ENCODE measurements at regions of chr1 and their contacts with region 1.

Region 1: GRCh38 chr1:59947047-59947938 is 20.7 kb upstream of the CYP2J2 start:
- DNase-seq: peak in 1 of 2 donors; percentile 69
- H3K4me3 ChIP-seq: no peak overlapping the region
- H3K27ac ChIP-seq: no peak overlapping the region
- H3K4me1 ChIP-seq: no peaks in the 10 kb centered on the region
- H3K27me3 ChIP-seq: no peaks in the 10 kb centered on the region
- CTCF ChIP-seq: peak; percentile 64 to 92 (median 88)

Region 2: GRCh38 chr1:59879574-59879973 is 67.7 kb before region 1 on chr1:
- intact Hi-C with region 1: loop called (anchors 2 kb)
- DNase-seq: no peak
- H3K4me3 ChIP-seq: no peak overlapping the region
- H3K27ac ChIP-seq: no peak overlapping the region
- H3K4me1 ChIP-seq: no peaks in the 10 kb centered on the region
- H3K27me3 ChIP-seq: no peaks in the 10 kb centered on the region
- CTCF ChIP-seq: peak in 1 of 3 experiments; percentile 41

Region 3: DNA sequence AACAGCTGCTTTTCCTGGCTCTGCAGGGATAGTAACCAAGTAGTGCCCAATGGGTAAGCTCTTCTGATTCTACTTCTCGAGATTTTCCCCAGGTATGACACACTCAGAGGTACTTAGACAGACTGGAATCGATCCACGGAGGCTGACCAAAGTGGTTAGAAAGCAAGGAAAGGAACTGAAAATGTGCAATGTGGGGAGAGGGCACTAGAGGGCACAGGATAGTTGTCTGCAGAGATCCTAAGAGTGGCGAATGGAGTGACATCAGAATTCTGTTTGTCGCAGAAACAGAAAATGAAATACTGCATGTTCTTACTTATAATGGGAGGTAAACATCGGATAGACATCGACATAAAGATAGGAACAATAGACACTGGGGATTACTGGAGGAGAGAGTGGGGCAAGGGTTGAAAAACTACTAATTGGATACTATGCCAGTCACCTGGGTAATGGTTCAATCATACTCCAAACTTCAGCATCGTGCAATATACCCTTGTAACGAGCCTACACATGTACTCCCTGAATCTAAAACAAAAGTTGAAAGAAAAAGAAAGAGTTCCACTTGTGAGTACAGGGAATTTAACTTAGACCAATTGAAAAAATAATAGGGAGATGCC is 44.0 kb before region 1 on chr1:
- intact Hi-C with region 1: loop called (anchors 5 kb)
- DNase-seq: no peak
- H3K4me3 ChIP-seq: no peak overlapping the region
- H3K27ac ChIP-seq: no peak overlapping the region
- H3K4me1 ChIP-seq: no peaks in the 10 kb centered on the region
- H3K27me3 ChIP-seq: no peaks in the 10 kb centered on the region
- CTCF ChIP-seq: peak in 1 of 3 experiments; percentile 31